Posterior cingulate gyrus (tissue), 11 donors: ENCODE measurements at regions of chr1 and their contacts with region 1.

Region 1: GRCh38 chr1:15323351-15323988 is 76.4 kb downstream of the FHAD1 start:
- DNase-seq: peak; percentile 54 to 96 (median 78)

Region 2: GRCh38 chr1:15430787-15431570 is 107.5 kb after region 1 on chr1:
- intact Hi-C with region 1: loop called (anchors 1 kb)
- DNase-seq: peak; percentile 54 to 97 (median 83)